Head of caudate nucleus (tissue), 42 donors: ENCODE measurements at regions of chr1 and their contacts with region 1.

Region 1: GRCh38 chr1:208895181-208895580 is 651.0 kb upstream of the PLXNA2 start:
- DNase-seq: no peak

Region 2: GRCh38 chr1:208855403-208855802 is 39.8 kb before region 1 on chr1:
- intact Hi-C with region 1: no loop called
- DNase-seq: no peak

Region 3: GRCh38 chr1:208934933-208935332 is 39.8 kb after region 1 on chr1:
- intact Hi-C with region 1: loop called (anchors 5 kb)
- DNase-seq: no peak